ENCODE measurements at regions of chr11 and their contacts with region 1.

Region 1: GRCh38 chr11:129323896-129324512 is 51.6 kb upstream of the BARX2 start:
- DNase-seq: no peak
- ATAC-seq: no peak
- H3K4me3 ChIP-seq: no peak overlapping the region
- H3K27ac ChIP-seq: no peak overlapping the region
- H3K4me1 ChIP-seq: peaks cover 8% of the 10 kb centered on the region; the same call in 1 of the 2 replicates
- H3K27me3 ChIP-seq: no peaks in the 10 kb centered on the region
- CTCF ChIP-seq: no peak

Region 2: DNA sequence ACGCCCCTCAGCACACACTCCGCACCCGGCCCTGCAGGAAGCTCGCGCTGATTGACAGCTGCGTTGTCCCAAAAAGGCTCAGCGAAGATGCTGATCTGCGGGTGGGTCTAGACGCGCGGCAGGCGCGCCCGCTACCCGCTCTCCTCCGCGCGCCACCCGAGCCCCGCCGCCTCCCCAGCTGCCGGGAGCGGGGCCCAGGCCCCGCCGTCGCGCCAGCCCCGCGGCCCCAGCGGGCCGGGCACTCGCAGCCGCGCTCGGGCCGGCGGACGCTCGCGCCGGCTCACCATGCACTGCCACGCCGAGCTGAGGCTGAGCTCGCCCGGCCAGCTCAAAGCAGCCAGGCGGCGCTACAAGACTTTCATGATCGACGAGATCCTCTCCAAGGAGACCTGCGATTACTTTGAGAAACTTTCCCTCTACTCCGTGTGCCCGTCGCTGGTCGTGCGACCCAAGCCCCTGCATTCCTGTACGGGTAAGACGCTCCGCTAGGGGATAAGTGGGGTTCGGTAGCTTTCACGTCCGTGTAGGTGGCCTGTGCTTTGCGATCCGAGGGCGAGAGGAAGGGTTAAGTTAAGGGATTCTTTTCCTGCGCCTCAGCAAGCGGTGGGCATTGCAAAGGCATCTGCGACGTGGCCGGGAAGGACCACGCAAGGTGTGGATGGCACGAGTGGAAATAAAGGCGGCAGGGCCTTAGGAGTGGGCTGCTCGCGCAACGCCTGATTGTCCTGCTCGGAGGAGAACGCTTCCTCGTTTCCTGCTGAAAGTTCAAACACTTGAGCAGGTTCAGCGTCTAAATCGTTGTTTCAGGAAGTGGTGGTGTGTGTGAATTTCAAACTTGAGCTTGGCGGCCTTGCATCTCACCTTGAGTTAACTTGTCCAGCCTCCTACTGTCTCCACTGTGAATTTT is 52.0 kb after region 1 on chr11 and contains the start of gene BARX2:
- CTCF ChIA-PET with region 1: interaction called, 12 read pairs
- POLR2A ChIA-PET with region 1: no interaction called
- in situ Hi-C with region 1: no loop called
- intact Hi-C with region 1: no loop called
- DNase-seq: peak; percentile 35
- ATAC-seq: peak; percentile 86
- H3K4me3 ChIP-seq: peak within 1 kb of the TSS; percentile 51 to 62
- H3K27ac ChIP-seq: peak within 1 kb of the TSS; percentile 77
- H3K4me1 ChIP-seq: peaks cover 18% of the 10 kb centered on the region
- H3K27me3 ChIP-seq: peaks cover 32% of the 10 kb centered on the region
- CTCF ChIP-seq: peak; percentile 93
- total RNA-seq, gene BARX2: 3.9 TPM

Region 3: DNA sequence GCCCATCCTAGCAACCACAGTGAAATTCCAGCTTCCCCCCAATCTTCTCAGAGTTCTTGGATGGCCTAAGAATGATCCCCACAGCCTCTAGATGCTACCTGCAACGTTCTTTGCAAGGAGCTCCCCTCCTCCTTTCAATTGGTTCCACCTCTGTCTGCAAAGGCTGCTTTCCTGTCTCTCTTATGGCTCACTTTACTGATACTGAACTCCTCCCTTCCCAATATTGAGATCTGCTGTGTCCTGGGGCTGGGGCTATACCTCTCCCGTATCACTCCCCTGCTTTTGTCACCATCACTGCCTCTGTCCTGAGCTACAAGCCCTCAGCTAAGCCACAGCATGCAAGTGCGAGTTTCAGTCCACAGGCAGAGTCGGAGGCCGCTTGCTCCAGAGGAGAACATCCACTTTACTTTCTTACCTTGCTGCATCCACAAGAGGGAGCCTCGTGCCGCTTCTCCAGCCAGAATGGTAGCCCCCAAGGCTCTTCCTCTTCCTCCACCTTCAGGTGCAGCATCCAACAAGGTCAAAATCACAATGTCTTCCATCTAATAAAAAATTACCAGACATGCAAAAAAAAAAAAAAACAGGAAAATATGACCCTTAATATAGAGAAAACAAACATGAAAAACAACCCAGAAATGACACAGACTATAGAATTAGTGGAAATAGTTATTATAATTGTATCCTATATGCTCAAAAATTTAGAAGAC is 443.0 kb after region 1 on chr11:
- CTCF ChIA-PET with region 1: no interaction called
- POLR2A ChIA-PET with region 1: interaction called, 11 read pairs
- in situ Hi-C with region 1: no loop called
- intact Hi-C with region 1: no loop called
- DNase-seq: no peak
- ATAC-seq: peak; percentile 94
- H3K4me3 ChIP-seq: peak overlapping the region in 1 of 2 experiments; percentile 9; a peak in 1 of 4 replicates
- H3K27ac ChIP-seq: no peak overlapping the region
- H3K4me1 ChIP-seq: no peaks in the 10 kb centered on the region; the same call in 1 of the 2 replicates
- H3K27me3 ChIP-seq: no peaks in the 10 kb centered on the region
- CTCF ChIP-seq: peak; percentile 87

Measured in Panc1 (cell line).